ENCODE measurements at regions of chr9 and their contacts with region 1.

Region 1: GRCh38 chr9:122350638-122351355 is 20.0 kb upstream of the PTGS1 start:
- DNase-seq: peak; percentile 77
- H3K4me3 ChIP-seq: no peak overlapping the region
- H3K27ac ChIP-seq: no peak overlapping the region
- H3K4me1 ChIP-seq: peaks cover 27% of the 10 kb centered on the region
- H3K27me3 ChIP-seq: no peaks in the 10 kb centered on the region
- CTCF ChIP-seq: peak; percentile 95

Region 2: DNA sequence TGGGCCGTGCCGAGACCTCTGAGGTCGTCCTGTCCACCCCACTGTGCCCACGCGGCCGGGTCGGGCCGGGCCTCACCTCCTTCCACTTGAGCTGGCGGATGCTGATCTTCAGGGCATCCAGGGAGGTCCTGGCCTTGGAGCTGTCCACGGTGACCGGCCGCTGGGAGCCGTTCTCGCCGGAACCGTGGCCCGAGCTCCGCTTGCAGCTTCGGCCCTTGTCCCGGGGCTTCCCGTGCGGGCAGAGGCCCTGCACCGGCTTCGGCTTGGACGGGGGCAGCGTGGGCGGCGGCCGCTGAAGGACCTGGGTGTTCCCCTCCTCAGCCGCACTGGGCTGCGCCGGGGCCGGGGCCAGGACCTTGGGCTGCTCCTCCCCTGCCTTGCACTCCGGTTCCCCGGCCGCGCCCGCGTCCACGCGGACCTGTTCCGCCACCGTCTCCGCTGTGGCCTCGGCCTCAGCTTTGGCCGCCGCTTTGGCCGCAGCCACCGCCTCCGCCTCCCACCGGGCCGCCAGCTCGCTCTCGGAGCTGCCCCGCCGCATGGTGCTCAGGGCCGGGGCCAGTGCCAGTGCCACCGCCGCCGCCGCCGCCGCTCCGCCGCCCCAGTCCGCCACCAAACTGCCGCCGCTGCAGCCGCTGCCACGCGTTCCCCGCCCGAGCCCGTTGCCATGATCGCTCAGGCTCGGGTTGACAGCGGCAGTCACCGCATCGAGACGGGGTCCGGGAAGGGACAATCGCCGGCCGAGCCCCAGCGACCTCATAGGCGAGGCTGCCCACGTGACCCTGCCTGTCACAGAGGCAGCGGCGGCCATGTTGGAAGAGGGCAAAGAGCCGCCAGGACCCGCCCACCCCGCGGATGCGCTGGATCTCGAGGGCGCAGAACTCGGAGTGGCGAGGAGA is 257.9 kb before region 1 on chr9 and contains the start of gene TTLL11:
- intact Hi-C with region 1: loop called (anchors 10 kb)
- DNase-seq: peak; percentile 98
- H3K4me3 ChIP-seq: peak within 1 kb of the TSS; percentile 83
- H3K27ac ChIP-seq: peak within 1 kb of the TSS; percentile 86
- H3K4me1 ChIP-seq: peaks cover 51% of the 10 kb centered on the region
- H3K27me3 ChIP-seq: no peaks in the 10 kb centered on the region
- CTCF ChIP-seq: no peak
- total RNA-seq, gene TTLL11: 7.3 TPM

Region 3: GRCh38 chr9:122125158-122125508 is 225.7 kb before region 1 on chr9:
- intact Hi-C with region 1: loop called (anchors 1 kb)
- DNase-seq: peak; percentile 80
- H3K4me3 ChIP-seq: no peak overlapping the region
- H3K27ac ChIP-seq: no peak overlapping the region
- H3K4me1 ChIP-seq: peaks cover 42% of the 10 kb centered on the region
- H3K27me3 ChIP-seq: peaks cover 20% of the 10 kb centered on the region
- CTCF ChIP-seq: peak; percentile 96

Region 4: DNA sequence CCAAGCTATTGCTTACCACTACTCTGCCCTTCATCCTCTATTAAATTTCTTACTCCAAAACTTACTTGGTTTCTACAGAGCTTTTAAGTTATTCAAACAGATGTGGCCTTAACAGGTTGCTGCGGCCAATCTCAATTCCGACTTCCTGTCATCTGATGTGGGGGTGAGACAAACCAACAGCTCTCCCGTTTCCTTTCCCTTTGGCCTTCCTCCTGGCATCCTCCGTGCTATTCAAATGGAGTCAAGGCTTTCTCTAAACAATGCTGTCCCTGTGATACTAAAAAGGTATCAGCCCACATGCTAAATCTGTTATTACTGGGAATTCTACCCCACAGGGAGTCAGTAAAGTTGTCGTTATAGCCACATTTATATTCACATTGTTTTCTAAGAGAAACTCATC is 98.0 kb before region 1 on chr9:
- intact Hi-C with region 1: loop called (anchors 10 kb)
- DNase-seq: no peak
- H3K4me3 ChIP-seq: no peak overlapping the region
- H3K27ac ChIP-seq: peak overlapping the region; percentile 75
- H3K4me1 ChIP-seq: peaks cover 45% of the 10 kb centered on the region
- H3K27me3 ChIP-seq: no peaks in the 10 kb centered on the region
- CTCF ChIP-seq: no peak

Region 5: GRCh38 chr9:122453677-122454135 is 102.9 kb after region 1 on chr9:
- intact Hi-C with region 1: loop called (anchors 10 kb)
- DNase-seq: no peak
- H3K4me3 ChIP-seq: no peak overlapping the region
- H3K27ac ChIP-seq: no peak overlapping the region
- H3K4me1 ChIP-seq: no peaks in the 10 kb centered on the region
- H3K27me3 ChIP-seq: peaks cover 24% of the 10 kb centered on the region
- CTCF ChIP-seq: no peak

Region 6: GRCh38 chr9:123278361-123278760 is 927.6 kb after region 1 on chr9:
- intact Hi-C with region 1: no loop called
- DNase-seq: no peak
- H3K4me3 ChIP-seq: no peak overlapping the region
- H3K27ac ChIP-seq: no peak overlapping the region
- H3K4me1 ChIP-seq: peaks cover 13% of the 10 kb centered on the region
- H3K27me3 ChIP-seq: no peaks in the 10 kb centered on the region
- CTCF ChIP-seq: no peak

Measured in left ventricle myocardium inferior (tissue), 1 donor.